ENCODE measurements at regions of chr16 and their contacts with region 1.

Region 1: GRCh38 chr16:22297114-22297878 is at the start of gene POLR3E:
- DNase-seq: peak; percentile 96 to 100
- ATAC-seq: peak; percentile 89
- total RNA-seq, gene POLR3E: 37.0 to 44.8 TPM

Region 2: DNA sequence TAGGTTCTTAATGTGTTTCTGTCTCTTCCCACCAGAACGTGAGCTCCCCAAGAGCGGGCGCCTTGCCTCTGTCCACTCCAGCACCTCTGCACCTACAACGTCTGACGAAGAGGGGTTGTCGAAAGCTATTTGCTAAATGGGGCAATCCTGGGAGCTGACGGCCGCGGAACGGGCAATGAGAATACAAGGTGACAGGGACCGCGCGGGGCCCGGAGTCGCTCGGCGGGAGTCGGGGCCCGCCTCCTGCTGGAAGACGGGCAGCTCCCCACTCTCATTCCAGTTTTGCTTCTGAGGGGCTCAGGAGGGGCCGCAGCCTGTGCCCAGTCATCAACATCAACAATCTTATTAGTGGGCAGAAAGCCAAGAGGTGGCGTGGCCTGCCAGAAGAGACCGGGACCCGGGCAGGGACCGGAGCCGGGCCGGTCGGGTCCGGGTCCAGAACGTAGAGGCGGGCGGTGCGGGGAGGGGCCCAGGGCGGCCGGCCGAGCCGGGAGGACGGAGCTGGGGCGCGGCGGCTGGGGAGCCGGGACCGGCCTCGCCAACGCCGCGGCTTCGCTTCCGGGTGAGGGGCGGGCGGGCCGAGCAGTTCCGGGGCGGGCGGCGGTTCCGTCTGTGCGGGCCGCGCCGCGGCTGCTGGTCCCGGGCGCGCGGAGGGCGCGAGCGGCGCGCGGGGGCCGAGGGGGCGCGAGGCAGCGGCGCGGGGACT is 289.6 kb before region 1 on chr16 and contains the start of gene MOSMO:
- intact Hi-C with region 1: loop called in 1 of 2 experiments (anchors 5 kb)
- DNase-seq: peak; percentile 53 to 81
- ATAC-seq: peak; percentile 93
- total RNA-seq, gene MOSMO: 9.0 to 9.6 TPM

Region 3: GRCh38 chr16:22195695-22196558 is 101.4 kb before region 1 on chr16:
- intact Hi-C with region 1: loop called (anchors 5 to 10 kb)
- DNase-seq: peak; percentile 77 to 91
- ATAC-seq: peak; percentile 35

Region 4: DNA sequence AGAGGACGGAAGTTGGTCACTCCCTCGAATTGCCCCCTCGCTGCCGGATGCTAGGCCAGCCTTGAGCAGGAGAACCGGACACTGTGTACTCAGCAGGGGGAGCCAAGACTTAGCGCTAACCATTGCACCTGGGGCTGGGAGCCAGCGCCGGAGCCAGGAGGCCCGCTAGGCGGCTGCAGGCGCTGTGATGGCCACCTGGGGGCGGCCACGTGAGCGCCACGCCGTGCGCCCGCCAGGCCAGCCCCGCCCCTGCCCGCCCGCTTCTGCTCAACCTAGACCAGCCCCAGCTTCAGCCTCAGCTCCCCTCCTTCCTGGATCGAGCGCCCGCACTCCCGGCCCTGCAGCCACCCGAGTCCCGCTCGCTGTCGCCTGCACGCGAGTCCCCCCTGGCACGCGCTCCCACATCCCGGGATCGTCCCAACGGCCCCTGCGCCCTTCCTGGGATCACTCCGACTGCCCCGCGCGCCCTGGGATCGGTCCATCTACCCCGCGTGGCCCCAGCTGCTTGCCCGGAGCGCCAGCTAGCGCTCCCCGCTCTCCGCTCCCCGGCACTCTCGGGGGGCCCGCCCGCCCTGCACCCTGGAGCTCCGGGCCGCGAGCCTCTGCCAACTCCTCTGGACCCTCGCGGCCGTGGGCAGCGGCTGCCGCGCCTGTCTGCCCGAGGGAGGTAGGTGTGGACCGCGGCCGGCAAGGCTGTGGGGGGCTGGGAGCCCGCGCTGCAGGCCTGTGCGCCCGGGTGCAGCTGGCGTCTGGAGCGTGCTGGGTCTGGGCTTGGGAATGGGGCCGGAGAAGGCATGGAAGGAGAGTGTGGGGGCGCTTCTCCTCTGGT is 91.1 kb before region 1 on chr16 and contains the start of gene EEF2K:
- intact Hi-C with region 1: loop called in 1 of 2 experiments (anchors 10 kb)
- DNase-seq: peak; percentile 94 to 95
- ATAC-seq: peak; percentile 86
- total RNA-seq, gene EEF2K: 26.4 to 35.2 TPM

Measured in left colon (tissue), 2 donors.